ENCODE measurements at regions of chr4 and their contacts with region 1.

Region 1: DNA sequence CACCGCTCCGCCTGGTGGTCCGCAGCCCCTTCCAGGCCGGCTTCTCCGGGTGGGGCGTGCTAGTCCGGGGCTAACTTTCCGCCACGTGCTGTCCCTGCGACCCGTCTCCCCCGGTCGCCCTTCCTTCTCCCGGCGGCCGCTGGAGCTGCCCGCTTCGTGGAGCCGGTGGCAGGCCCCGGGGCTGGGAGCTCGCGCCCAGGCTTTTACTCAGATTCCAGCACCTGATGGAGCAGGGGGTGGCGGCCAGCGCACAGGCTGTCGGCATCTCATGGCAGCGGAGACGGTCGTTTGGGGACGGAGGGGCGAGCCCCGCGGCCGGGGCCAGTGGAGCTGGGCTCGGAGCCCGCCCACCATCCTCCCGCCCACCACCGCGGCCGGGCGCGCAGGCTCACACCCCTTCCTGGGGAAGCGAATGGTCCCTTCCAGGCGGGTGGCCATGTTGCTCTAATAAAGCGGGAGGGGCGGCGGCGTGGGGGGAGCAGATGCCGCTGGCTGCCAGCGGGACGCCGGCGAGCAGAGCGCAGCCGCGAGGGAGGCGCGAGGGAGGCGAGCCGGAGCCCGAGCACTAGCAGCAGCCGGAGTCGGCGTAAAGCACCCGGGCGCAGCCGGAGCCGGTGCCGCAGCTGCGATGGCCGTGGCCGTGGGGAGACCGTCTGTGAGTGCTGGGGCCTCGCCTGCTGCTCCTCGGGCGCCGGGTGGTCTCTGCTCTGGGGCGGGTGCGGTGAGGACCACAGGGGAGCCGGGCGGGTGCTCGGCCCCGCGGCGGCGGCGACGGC is at the start of gene SEPTIN11:
- DNase-seq: peak; percentile 56 to 78 (median 72)
- ATAC-seq: peak; percentile 87
- H3K4me3 ChIP-seq: peak within 1 kb of the TSS; percentile 80
- H3K4me3 Mint-ChIP-seq: peak within 1 kb of the TSS; percentile 70 to 97 (median 88)
- H3K27ac ChIP-seq: peak within 1 kb of the TSS; percentile 58
- H3K27ac Mint-ChIP-seq: peak within 1 kb of the TSS in 7 of 9 donors; percentile 28 to 82 (median 71)
- H3K4me1 ChIP-seq: peaks cover 0 to 10% of the 10 kb centered on the region in 2 donors
- H3K4me1 Mint-ChIP-seq: peaks cover 8 to 23% (median 16%) of the 10 kb centered on the region in 7 donors
- H3K27me3 ChIP-seq: peaks cover 0 to 6% of the 10 kb centered on the region in 2 donors
- H3K27me3 Mint-ChIP-seq: peaks cover 0 to 71% (median 4%) of the 10 kb centered on the region in 5 donors
- total RNA-seq, gene SEPTIN11: 12.2 to 29.3 (median 20.3) TPM

Region 2: GRCh38 chr4:75995727-75996126 is 953.7 kb before region 1 on chr4:
- CTCF ChIA-PET with region 1: no interaction called
- POLR2A ChIA-PET with region 1: no interaction called
- intact Hi-C with region 1: loop called in 1 of 2 experiments (anchors 10 kb)
- DNase-seq: peak in 7 of 9 donors; percentile 13 to 62 (median 43)
- ATAC-seq: peak; percentile 39
- H3K4me3 ChIP-seq: no peak overlapping the region
- H3K4me3 Mint-ChIP-seq: no peak overlapping the region
- H3K27ac ChIP-seq: no peak overlapping the region
- H3K27ac Mint-ChIP-seq: no peak overlapping the region
- H3K4me1 ChIP-seq: no peaks in the 10 kb centered on the region
- H3K4me1 Mint-ChIP-seq: peaks cover 0 to 10% (median 5%) of the 10 kb centered on the region in 7 donors
- H3K27me3 ChIP-seq: no peaks in the 10 kb centered on the region
- H3K27me3 Mint-ChIP-seq: peaks cover 0 to 10% (median 2%) of the 10 kb centered on the region in 5 donors

Region 3: DNA sequence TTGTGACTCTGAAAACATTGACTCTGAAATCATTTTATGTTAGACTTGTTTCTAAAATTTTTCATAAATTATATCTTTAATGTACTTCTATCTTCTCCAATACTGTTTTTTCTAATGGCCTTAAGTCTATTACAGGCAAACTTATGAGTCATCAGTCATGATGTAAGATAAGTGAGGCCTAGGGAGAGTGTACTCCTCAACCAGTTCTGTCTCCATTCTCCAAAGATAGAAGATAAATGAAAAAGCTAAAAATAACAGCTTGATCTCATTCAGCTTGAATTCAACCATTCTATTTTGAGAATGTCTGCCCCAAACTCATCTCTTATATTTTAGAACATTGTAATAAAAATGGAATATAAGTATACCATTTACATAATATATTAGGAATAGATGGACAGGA is 608.4 kb before region 1 on chr4:
- CTCF ChIA-PET with region 1: no interaction called
- POLR2A ChIA-PET with region 1: no interaction called
- intact Hi-C with region 1: no loop called
- DNase-seq: no peak
- ATAC-seq: no peak
- H3K4me3 ChIP-seq: no peak overlapping the region
- H3K4me3 Mint-ChIP-seq: no peak overlapping the region
- H3K27ac ChIP-seq: no peak overlapping the region
- H3K27ac Mint-ChIP-seq: no peak overlapping the region
- H3K4me1 ChIP-seq: no peaks in the 10 kb centered on the region
- H3K4me1 Mint-ChIP-seq: no peaks in the 10 kb centered on the region
- H3K27me3 ChIP-seq: no peaks in the 10 kb centered on the region
- H3K27me3 Mint-ChIP-seq: peaks cover 0 to 26% (median 10%) of the 10 kb centered on the region in 5 donors

Region 4: GRCh38 chr4:76923619-76924357 is 25.7 kb before region 1 on chr4:
- CTCF ChIA-PET with region 1: no interaction called
- POLR2A ChIA-PET with region 1: no interaction called
- intact Hi-C with region 1: loop called in 1 of 2 experiments (anchors 2 kb)
- DNase-seq: no peak
- ATAC-seq: no peak
- H3K4me3 ChIP-seq: no peak overlapping the region
- H3K4me3 Mint-ChIP-seq: no peak overlapping the region
- H3K27ac ChIP-seq: no peak overlapping the region
- H3K27ac Mint-ChIP-seq: no peak overlapping the region
- H3K4me1 ChIP-seq: no peaks in the 10 kb centered on the region
- H3K4me1 Mint-ChIP-seq: no peaks in the 10 kb centered on the region
- H3K27me3 ChIP-seq: no peaks in the 10 kb centered on the region
- H3K27me3 Mint-ChIP-seq: peaks cover 0 to 13% (median 0%) of the 10 kb centered on the region in 5 donors

Region 5: DNA sequence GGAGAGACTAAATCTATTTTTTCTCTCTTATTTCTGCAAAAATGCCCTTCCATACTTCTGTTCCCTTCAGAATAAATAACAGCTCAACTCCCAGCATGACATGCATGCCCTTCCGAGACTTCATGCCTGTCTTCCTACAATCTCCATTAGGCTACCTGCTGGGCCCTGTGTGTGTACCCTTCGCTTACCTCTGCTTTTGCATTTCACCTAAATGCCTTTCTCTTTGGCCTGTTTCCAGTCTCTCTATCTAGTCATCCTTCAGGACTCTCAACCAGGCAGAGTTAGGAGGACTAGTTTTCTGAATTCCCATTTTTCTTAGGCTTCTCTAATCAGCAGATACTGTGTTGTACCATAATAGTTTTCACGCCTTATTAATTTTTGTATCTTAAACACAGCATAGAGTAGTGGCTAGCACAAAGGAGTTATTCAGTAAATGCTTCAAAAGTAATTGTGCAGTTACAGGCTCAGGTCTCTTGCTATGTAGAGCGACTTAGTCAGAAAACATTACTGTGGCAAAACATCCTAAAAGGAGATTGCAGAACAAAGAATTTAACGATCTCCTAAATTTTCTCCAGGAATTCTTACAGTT is 20.6 kb after region 1 on chr4:
- CTCF ChIA-PET with region 1: no interaction called
- POLR2A ChIA-PET with region 1: no interaction called
- intact Hi-C with region 1: loop called in 1 of 2 experiments (anchors 2 kb)
- DNase-seq: no peak
- ATAC-seq: no peak
- H3K4me3 ChIP-seq: no peak overlapping the region
- H3K4me3 Mint-ChIP-seq: no peak overlapping the region
- H3K27ac ChIP-seq: no peak overlapping the region
- H3K27ac Mint-ChIP-seq: peak overlapping the region in 1 of 9 donors; percentile 43
- H3K4me1 ChIP-seq: no peaks in the 10 kb centered on the region
- H3K4me1 Mint-ChIP-seq: peaks cover 0 to 11% (median 10%) of the 10 kb centered on the region in 7 donors
- H3K27me3 ChIP-seq: no peaks in the 10 kb centered on the region
- H3K27me3 Mint-ChIP-seq: peaks cover 0 to 20% (median 0%) of the 10 kb centered on the region in 5 donors

Region 6: GRCh38 chr4:76993787-76994641 is 44.5 kb after region 1 on chr4:
- CTCF ChIA-PET with region 1: no interaction called
- POLR2A ChIA-PET with region 1: interaction called, 4 read pairs
- intact Hi-C with region 1: loop called in 1 of 2 experiments (anchors 1 kb)
- DNase-seq: peak in 8 of 9 donors; percentile 42 to 90 (median 86)
- ATAC-seq: peak; percentile 82
- H3K4me3 ChIP-seq: peak overlapping the region; percentile 52
- H3K4me3 Mint-ChIP-seq: peak overlapping the region; percentile 56 to 94 (median 79)
- H3K27ac ChIP-seq: peak overlapping the region; percentile 19
- H3K27ac Mint-ChIP-seq: peak overlapping the region; percentile 73 to 97 (median 84)
- H3K4me1 ChIP-seq: peaks cover 28 to 50% of the 10 kb centered on the region in 2 donors
- H3K4me1 Mint-ChIP-seq: peaks cover 39 to 84% (median 59%) of the 10 kb centered on the region in 7 donors
- H3K27me3 ChIP-seq: no peaks in the 10 kb centered on the region
- H3K27me3 Mint-ChIP-seq: peaks cover 0 to 27% (median 0%) of the 10 kb centered on the region in 5 donors

Region 7: GRCh38 chr4:77031544-77031943 is 82.1 kb after region 1 on chr4:
- CTCF ChIA-PET with region 1: no interaction called
- POLR2A ChIA-PET with region 1: interaction called, 3 read pairs
- intact Hi-C with region 1: loop called (anchors 1 to 5 kb)
- DNase-seq: peak in 3 of 9 donors; percentile 31 to 47 (median 31)
- ATAC-seq: peak; percentile 82
- H3K4me3 ChIP-seq: no peak overlapping the region
- H3K4me3 Mint-ChIP-seq: peak overlapping the region in 5 of 10 donors; percentile 9 to 50 (median 10)
- H3K27ac ChIP-seq: no peak overlapping the region
- H3K27ac Mint-ChIP-seq: peak overlapping the region in 5 of 9 donors; percentile 23 to 76 (median 41)
- H3K4me1 ChIP-seq: peaks cover 16 to 31% of the 10 kb centered on the region in 2 donors
- H3K4me1 Mint-ChIP-seq: peaks cover 24 to 50% (median 45%) of the 10 kb centered on the region in 7 donors
- H3K27me3 ChIP-seq: no peaks in the 10 kb centered on the region
- H3K27me3 Mint-ChIP-seq: no peaks in the 10 kb centered on the region

Region 8: DNA sequence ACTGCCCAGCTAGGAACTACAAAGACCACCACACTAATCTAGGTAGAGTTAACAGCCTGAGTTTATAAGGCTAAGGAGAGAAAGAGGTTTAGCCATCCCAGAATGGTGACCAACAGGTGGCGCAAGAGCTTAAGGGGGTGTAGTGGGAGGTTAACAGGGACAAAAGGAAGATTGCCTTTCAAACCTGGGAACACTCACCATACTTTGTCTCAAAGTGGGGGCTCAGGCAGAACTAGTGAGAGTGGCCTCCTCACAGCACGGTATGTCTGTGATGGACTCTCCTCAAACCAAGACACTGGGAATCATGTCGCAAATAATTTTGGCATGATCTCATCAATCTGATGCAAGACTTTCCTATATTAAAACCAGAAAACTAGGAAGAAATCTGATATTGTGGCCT is 102.9 kb after region 1 on chr4:
- CTCF ChIA-PET with region 1: no interaction called
- POLR2A ChIA-PET with region 1: no interaction called
- intact Hi-C with region 1: no loop called
- DNase-seq: peak in 7 of 9 donors; percentile 18 to 59 (median 42)
- ATAC-seq: peak; percentile 74
- H3K4me3 ChIP-seq: no peak overlapping the region
- H3K4me3 Mint-ChIP-seq: no peak overlapping the region
- H3K27ac ChIP-seq: no peak overlapping the region
- H3K27ac Mint-ChIP-seq: peak overlapping the region in 6 of 9 donors; percentile 14 to 83 (median 70)
- H3K4me1 ChIP-seq: no peaks in the 10 kb centered on the region
- H3K4me1 Mint-ChIP-seq: peaks cover 0 to 19% (median 9%) of the 10 kb centered on the region in 7 donors
- H3K27me3 ChIP-seq: no peaks in the 10 kb centered on the region
- H3K27me3 Mint-ChIP-seq: no peaks in the 10 kb centered on the region

Region 9: GRCh38 chr4:77193511-77194102 is 244.1 kb after region 1 on chr4:
- CTCF ChIA-PET with region 1: no interaction called
- POLR2A ChIA-PET with region 1: no interaction called
- intact Hi-C with region 1: loop called in 1 of 2 experiments (anchors 5 kb)
- DNase-seq: peak; percentile 47 to 79 (median 72)
- ATAC-seq: peak; percentile 95
- H3K4me3 ChIP-seq: peak overlapping the region; percentile 25
- H3K4me3 Mint-ChIP-seq: peak overlapping the region; percentile 78 to 93 (median 90)
- H3K27ac ChIP-seq: peak overlapping the region; percentile 52
- H3K27ac Mint-ChIP-seq: peak overlapping the region; percentile 88 to 97 (median 92)
- H3K4me1 ChIP-seq: peaks cover 0 to 6% of the 10 kb centered on the region in 2 donors
- H3K4me1 Mint-ChIP-seq: peaks cover 5 to 22% (median 18%) of the 10 kb centered on the region in 7 donors
- H3K27me3 ChIP-seq: peaks cover 0 to 5% of the 10 kb centered on the region in 2 donors
- H3K27me3 Mint-ChIP-seq: peaks cover 0 to 10% (median 0%) of the 10 kb centered on the region in 5 donors

Measured in naive thymus-derived CD4-positive, alpha-beta T cell (primary cell).